ENCODE measurements at regions of chr6 and their contacts with region 1.

Region 1: DNA sequence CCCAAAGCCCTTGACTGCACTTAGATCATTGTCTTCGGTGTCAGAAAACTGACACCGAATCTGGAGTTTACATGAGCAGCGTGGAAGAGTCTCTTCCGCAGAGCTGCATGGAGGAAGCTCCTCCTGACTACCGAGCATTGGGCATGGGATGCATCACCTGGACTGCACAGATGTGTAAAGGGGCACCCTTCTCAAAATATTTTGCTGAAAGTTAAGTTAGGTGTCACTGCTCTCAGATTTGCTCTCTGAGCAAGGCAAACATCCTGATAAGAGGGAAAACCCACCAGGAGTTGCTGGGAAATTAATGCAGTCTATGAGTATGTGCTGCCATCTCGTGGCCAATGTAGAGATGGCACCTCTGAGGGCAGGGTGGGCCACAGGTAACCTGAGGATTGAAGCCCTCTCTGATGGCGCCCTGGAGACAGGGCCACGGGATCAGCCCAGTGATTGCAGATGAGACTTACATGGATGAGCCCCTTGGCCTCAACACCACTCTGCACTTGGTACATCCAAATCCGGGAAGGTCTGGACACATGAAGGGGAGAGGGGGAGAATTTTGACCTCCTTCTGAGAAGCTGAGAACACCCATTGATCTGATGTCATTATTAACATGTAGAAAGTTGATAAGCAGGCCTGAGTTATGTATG is 129.9 kb downstream of the LPA start:
- DNase-seq: peak; percentile 64
- H3K4me3 Mint-ChIP-seq: no peak overlapping the region
- H3K27ac Mint-ChIP-seq: no peak overlapping the region
- H3K4me1 Mint-ChIP-seq: no peaks in the 10 kb centered on the region
- H3K27me3 Mint-ChIP-seq: no peaks in the 10 kb centered on the region
- CTCF ChIP-seq: peak; percentile 95

Region 2: GRCh38 chr6:160088069-160088783 is 445.9 kb before region 1 on chr6:
- CTCF ChIA-PET with region 1: interaction called, 25 read pairs
- POLR2A ChIA-PET with region 1: interaction called, 4 read pairs
- intact Hi-C with region 1: loop called (anchors 1 kb)
- DNase-seq: peak; percentile 76
- H3K4me3 Mint-ChIP-seq: no peak overlapping the region
- H3K27ac Mint-ChIP-seq: no peak overlapping the region
- H3K4me1 Mint-ChIP-seq: no peaks in the 10 kb centered on the region
- H3K27me3 Mint-ChIP-seq: no peaks in the 10 kb centered on the region
- CTCF ChIP-seq: peak; percentile 68

Region 3: DNA sequence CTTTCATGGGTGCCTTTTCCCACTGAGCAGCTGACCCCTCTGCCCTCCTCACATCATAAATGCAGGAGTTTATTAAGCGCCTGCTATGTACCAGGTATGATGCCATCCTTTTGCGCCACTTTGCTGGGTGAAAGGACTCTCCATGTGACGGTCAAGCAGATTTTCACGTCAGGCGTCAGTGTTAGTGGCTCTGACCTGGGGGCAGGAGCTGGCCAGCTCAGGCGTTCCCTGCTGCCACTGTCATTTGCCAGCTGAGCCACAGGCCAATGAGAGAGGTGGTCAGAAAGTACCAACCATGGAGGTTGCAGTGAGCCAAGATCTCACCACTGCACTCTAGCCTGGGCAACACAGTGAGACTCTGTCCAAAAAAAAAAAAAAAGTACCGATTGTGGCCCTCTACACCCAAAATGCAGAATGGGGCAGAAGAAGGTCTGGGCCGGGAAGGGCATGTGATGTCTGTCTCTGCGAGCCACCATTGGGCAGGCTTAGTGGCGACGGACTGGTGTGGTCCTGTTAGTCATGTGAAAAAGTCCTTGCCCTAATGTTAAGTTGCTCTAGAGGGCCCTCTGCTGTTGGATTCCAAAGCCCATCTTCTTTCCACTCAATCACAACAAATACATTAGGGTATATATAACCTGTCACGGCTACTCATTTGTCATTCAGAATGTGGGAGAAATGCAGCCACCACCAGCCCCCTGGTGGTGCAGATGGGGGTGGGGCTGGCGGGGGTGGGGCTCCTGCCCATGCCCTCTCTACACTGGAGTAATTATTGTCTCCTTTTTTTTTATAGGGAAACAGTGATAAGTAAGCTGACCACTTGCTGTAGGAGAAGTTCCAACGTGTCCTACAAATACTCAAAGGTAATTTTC is 431.0 kb before region 1 on chr6:
- CTCF ChIA-PET with region 1: interaction called, 11 read pairs
- POLR2A ChIA-PET with region 1: no interaction called
- intact Hi-C with region 1: no loop called
- DNase-seq: peak; percentile 48
- H3K4me3 Mint-ChIP-seq: no peak overlapping the region
- H3K27ac Mint-ChIP-seq: no peak overlapping the region
- H3K4me1 Mint-ChIP-seq: no peaks in the 10 kb centered on the region
- H3K27me3 Mint-ChIP-seq: no peaks in the 10 kb centered on the region
- CTCF ChIP-seq: peak; percentile 28

Region 4: GRCh38 chr6:160137989-160138835 is 396.0 kb before region 1 on chr6:
- CTCF ChIA-PET with region 1: interaction called, 11 read pairs
- POLR2A ChIA-PET with region 1: no interaction called
- intact Hi-C with region 1: loop called (anchors 1 kb)
- DNase-seq: peak; percentile 73
- H3K4me3 Mint-ChIP-seq: no peak overlapping the region
- H3K27ac Mint-ChIP-seq: no peak overlapping the region
- H3K4me1 Mint-ChIP-seq: peaks cover 25% of the 10 kb centered on the region
- H3K27me3 Mint-ChIP-seq: no peaks in the 10 kb centered on the region
- CTCF ChIP-seq: peak; percentile 80

Region 5: GRCh38 chr6:160221423-160221822 is 312.8 kb before region 1 on chr6:
- CTCF ChIA-PET with region 1: interaction called, 6 read pairs
- POLR2A ChIA-PET with region 1: no interaction called
- intact Hi-C with region 1: loop called (anchors 1 kb)
- DNase-seq: peak; percentile 54
- H3K4me3 Mint-ChIP-seq: no peak overlapping the region
- H3K27ac Mint-ChIP-seq: no peak overlapping the region
- H3K4me1 Mint-ChIP-seq: no peaks in the 10 kb centered on the region
- H3K27me3 Mint-ChIP-seq: peaks cover 17% of the 10 kb centered on the region
- CTCF ChIP-seq: peak; percentile 28

Region 6: GRCh38 chr6:160520043-160520904 is 13.9 kb before region 1 on chr6:
- CTCF ChIA-PET with region 1: interaction called, 93 read pairs
- POLR2A ChIA-PET with region 1: interaction called, 4 read pairs
- intact Hi-C with region 1: no loop called
- DNase-seq: peak; percentile 75
- H3K4me3 Mint-ChIP-seq: peak overlapping the region; percentile 93
- H3K27ac Mint-ChIP-seq: peak overlapping the region; percentile 67
- H3K4me1 Mint-ChIP-seq: peaks cover 10% of the 10 kb centered on the region
- H3K27me3 Mint-ChIP-seq: no peaks in the 10 kb centered on the region
- CTCF ChIP-seq: no peak

Region 7: DNA sequence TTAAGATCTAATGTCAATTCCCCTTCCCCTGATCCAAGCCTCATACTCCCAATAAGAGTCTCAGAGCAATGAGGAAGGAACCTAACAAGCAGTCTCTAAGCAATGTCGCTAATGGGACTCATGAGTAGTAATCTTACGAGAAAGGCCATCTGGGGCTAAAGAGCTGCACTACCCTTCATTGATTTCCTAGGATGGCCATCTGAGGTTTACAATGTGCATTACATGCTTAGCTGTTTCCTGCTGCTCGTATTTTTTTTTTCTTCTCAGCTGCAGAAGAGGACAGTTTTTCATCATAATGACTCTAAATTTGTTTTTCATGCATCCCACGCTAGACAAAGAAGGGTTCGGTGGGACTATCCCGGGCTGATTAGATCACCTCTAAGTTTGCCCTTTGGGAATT is 10.6 kb after region 1 on chr6:
- CTCF ChIA-PET with region 1: interaction called, 15 read pairs
- POLR2A ChIA-PET with region 1: no interaction called
- intact Hi-C with region 1: no loop called
- DNase-seq: no peak
- H3K4me3 Mint-ChIP-seq: no peak overlapping the region
- H3K27ac Mint-ChIP-seq: no peak overlapping the region
- H3K4me1 Mint-ChIP-seq: no peaks in the 10 kb centered on the region
- H3K27me3 Mint-ChIP-seq: peaks cover 60% of the 10 kb centered on the region
- CTCF ChIP-seq: no peak

Region 8: DNA sequence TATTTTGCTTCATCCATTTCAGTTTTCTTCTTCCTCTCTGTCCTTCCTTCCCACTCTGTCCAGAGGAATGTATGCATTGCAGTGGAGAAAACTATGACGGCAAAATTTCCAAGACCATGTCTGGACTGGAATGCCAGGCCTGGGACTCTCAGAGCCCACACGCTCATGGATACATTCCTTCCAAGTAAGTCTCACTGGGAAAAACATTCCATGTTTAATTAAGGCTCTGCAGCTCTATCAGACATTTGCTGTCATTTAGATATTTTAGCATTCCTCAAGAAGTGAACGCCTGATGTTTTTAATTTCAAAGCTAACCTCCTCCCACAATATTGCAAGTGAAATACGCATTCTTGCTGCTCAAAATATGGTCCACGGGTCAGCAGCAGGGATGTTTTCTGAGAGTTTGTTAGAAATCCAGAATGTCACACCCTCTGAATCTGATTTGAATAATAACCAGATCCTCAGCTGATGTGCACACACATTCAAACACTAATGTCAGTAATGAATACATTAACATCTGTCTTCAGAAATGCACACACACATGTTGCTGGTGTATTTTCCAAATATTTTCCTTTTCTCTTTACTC is 180.7 kb after region 1 on chr6:
- CTCF ChIA-PET with region 1: no interaction called
- POLR2A ChIA-PET with region 1: no interaction called
- intact Hi-C with region 1: no loop called
- DNase-seq: no peak
- H3K4me3 Mint-ChIP-seq: no peak overlapping the region
- H3K27ac Mint-ChIP-seq: no peak overlapping the region
- H3K4me1 Mint-ChIP-seq: no peaks in the 10 kb centered on the region
- H3K27me3 Mint-ChIP-seq: no peaks in the 10 kb centered on the region
- CTCF ChIP-seq: no peak

Measured in MCF 10A (cell line).